Naive thymus-derived CD4-positive, alpha-beta T cell (primary cell): ENCODE measurements at regions of chr16 and their contacts with region 1.

Region 1: GRCh38 chr16:21158208-21159110 is at the start of gene LDAF1:
- DNase-seq: peak; percentile 59 to 86 (median 74)
- ATAC-seq: peak; percentile 97
- H3K4me3 ChIP-seq: peak within 1 kb of the TSS; percentile 62
- H3K4me3 Mint-ChIP-seq: peak within 1 kb of the TSS; percentile 88 to 96 (median 94)
- H3K27ac ChIP-seq: peak within 1 kb of the TSS; percentile 65
- H3K27ac Mint-ChIP-seq: peak within 1 kb of the TSS; percentile 60 to 91 (median 71)
- H3K4me1 ChIP-seq: peaks cover 9 to 12% of the 10 kb centered on the region in 2 donors
- H3K4me1 Mint-ChIP-seq: peaks cover 10 to 35% (median 30%) of the 10 kb centered on the region in 7 donors
- H3K27me3 ChIP-seq: no peaks in the 10 kb centered on the region
- H3K27me3 Mint-ChIP-seq: no peaks in the 10 kb centered on the region
- total RNA-seq, gene LDAF1: 8.2 to 16.9 (median 11.0) TPM

Region 2: GRCh38 chr16:20763461-20764232 is 394.8 kb before region 1 on chr16 and contains the start of gene ACSM3:
- CTCF ChIA-PET with region 1: no interaction called
- POLR2A ChIA-PET with region 1: no interaction called
- intact Hi-C with region 1: loop called in 1 of 2 experiments (anchors 2 kb)
- DNase-seq: peak in 8 of 9 donors; percentile 51 to 84 (median 79)
- ATAC-seq: peak; percentile 99
- H3K4me3 ChIP-seq: peak within 1 kb of the TSS; percentile 72
- H3K4me3 Mint-ChIP-seq: peak within 1 kb of the TSS; percentile 80 to 97 (median 93)
- H3K27ac ChIP-seq: peak within 1 kb of the TSS; percentile 72
- H3K27ac Mint-ChIP-seq: peak within 1 kb of the TSS; percentile 90 to 96 (median 93)
- H3K4me1 ChIP-seq: peaks cover 4 to 13% of the 10 kb centered on the region in 2 donors
- H3K4me1 Mint-ChIP-seq: peaks cover 7 to 46% (median 31%) of the 10 kb centered on the region in 7 donors
- H3K27me3 ChIP-seq: no peaks in the 10 kb centered on the region
- H3K27me3 Mint-ChIP-seq: no peaks in the 10 kb centered on the region
- total RNA-seq, gene ACSM3: 3.0 to 10.9 (median 7.4) TPM

Region 3: GRCh38 chr16:21023509-21024202 is 134.8 kb before region 1 on chr16:
- CTCF ChIA-PET with region 1: no interaction called
- POLR2A ChIA-PET with region 1: no interaction called
- intact Hi-C with region 1: no loop called
- DNase-seq: peak in 1 of 9 donors; percentile 2
- ATAC-seq: peak; percentile 70
- H3K4me3 ChIP-seq: no peak overlapping the region
- H3K4me3 Mint-ChIP-seq: peak overlapping the region in 8 of 10 donors; percentile 0 to 40 (median 13)
- H3K27ac ChIP-seq: no peak overlapping the region
- H3K27ac Mint-ChIP-seq: peak overlapping the region in 4 of 9 donors; percentile 12 to 51 (median 29)
- H3K4me1 ChIP-seq: peaks cover 0 to 6% of the 10 kb centered on the region in 2 donors
- H3K4me1 Mint-ChIP-seq: peaks cover 6 to 14% (median 13%) of the 10 kb centered on the region in 7 donors
- H3K27me3 ChIP-seq: no peaks in the 10 kb centered on the region
- H3K27me3 Mint-ChIP-seq: peaks cover 0 to 11% (median 0%) of the 10 kb centered on the region in 5 donors

Region 4: GRCh38 chr16:21277927-21278706 is 119.7 kb after region 1 on chr16 and contains the start of gene CRYM:
- CTCF ChIA-PET with region 1: no interaction called
- POLR2A ChIA-PET with region 1: no interaction called
- intact Hi-C with region 1: loop called in 1 of 2 experiments (anchors 1 kb)
- DNase-seq: peak in 7 of 9 donors; percentile 10 to 56 (median 17)
- ATAC-seq: peak; percentile 83
- H3K4me3 ChIP-seq: no peak within 1 kb of the TSS
- H3K4me3 Mint-ChIP-seq: peak within 1 kb of the TSS in 8 of 10 donors; percentile 24 to 69 (median 50)
- H3K27ac ChIP-seq: no peak within 1 kb of the TSS
- H3K27ac Mint-ChIP-seq: no peak within 1 kb of the TSS
- H3K4me1 ChIP-seq: no peaks in the 10 kb centered on the region
- H3K4me1 Mint-ChIP-seq: peaks cover 0 to 7% (median 5%) of the 10 kb centered on the region in 7 donors
- H3K27me3 ChIP-seq: peaks cover 0 to 10% of the 10 kb centered on the region in 2 donors
- H3K27me3 Mint-ChIP-seq: peaks cover 60 to 78% (median 66%) of the 10 kb centered on the region in 5 donors
- total RNA-seq, gene CRYM: 0.44 TPM in 1 of 5 experiments, not detected in the others

Region 5: GRCh38 chr16:21300309-21301167 is 142.1 kb after region 1 on chr16:
- CTCF ChIA-PET with region 1: no interaction called
- POLR2A ChIA-PET with region 1: no interaction called
- intact Hi-C with region 1: loop called in 1 of 2 experiments (anchors 1 kb)
- DNase-seq: peak in 6 of 9 donors; percentile 4 to 59 (median 8)
- ATAC-seq: peak; percentile 77
- H3K4me3 ChIP-seq: peak overlapping the region; percentile 69
- H3K4me3 Mint-ChIP-seq: peak overlapping the region; percentile 88 to 99 (median 94)
- H3K27ac ChIP-seq: no peak overlapping the region
- H3K27ac Mint-ChIP-seq: peak overlapping the region in 3 of 9 donors; percentile 19 to 72 (median 69)
- H3K4me1 ChIP-seq: peaks cover 0 to 10% of the 10 kb centered on the region in 2 donors
- H3K4me1 Mint-ChIP-seq: peaks cover 22 to 29% (median 27%) of the 10 kb centered on the region in 7 donors
- H3K27me3 ChIP-seq: no peaks in the 10 kb centered on the region
- H3K27me3 Mint-ChIP-seq: peaks cover 8 to 57% (median 24%) of the 10 kb centered on the region in 5 donors